Upper lobe of right lung (tissue), 1 donor: ENCODE measurements at regions of chr3 and their contacts with region 1.

Region 1: GRCh38 chr3:194592798-194593752 is 40.1 kb downstream of the TMEM44 start:
- DNase-seq: no peak
- ATAC-seq: peak; percentile 60
- H3K4me3 ChIP-seq: no peak overlapping the region
- H3K27ac ChIP-seq: no peak overlapping the region
- H3K4me1 ChIP-seq: no peaks in the 10 kb centered on the region
- H3K27me3 ChIP-seq: no peaks in the 10 kb centered on the region
- CTCF ChIP-seq: no peak

Region 2: DNA sequence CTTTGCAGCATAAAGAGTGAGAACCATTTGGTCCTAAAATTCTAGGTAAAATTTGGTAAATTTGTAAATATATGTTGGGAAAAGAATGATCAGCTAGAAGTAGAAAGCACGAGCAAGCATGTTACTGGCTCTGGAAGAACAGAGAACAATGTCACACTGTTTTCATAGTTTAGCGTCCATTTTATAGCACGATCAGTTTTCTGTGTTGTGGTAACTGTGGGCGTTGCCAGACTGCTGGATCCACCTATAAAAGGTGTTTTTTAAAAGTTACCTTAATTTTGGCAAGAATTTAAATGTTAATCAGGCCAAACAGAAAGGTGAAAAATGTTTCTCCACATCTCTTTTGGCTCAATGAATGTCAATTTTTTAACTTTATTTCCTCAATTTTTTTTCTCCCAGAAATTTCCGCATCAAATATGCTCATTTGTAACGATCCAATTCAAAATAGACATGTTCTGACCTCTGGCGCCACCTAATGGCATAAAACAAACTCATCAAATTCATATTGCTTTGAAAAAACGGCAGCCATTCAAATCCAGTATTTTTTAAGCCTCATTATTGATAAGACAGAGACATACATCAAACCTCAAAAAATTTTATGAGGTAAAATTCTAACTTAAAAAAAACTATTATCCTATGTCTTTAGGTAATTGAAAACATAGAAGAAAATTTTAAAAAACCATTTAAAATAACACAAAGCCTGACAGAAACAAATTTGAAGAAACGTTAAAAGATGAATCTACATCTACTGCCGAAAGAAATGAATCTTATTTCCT is 188.5 kb before region 1 on chr3:
- intact Hi-C with region 1: no loop called
- DNase-seq: no peak
- ATAC-seq: peak; percentile 56
- H3K4me3 ChIP-seq: no peak overlapping the region
- H3K27ac ChIP-seq: no peak overlapping the region
- H3K4me1 ChIP-seq: no peaks in the 10 kb centered on the region
- H3K27me3 ChIP-seq: peaks cover 5% of the 10 kb centered on the region
- CTCF ChIP-seq: peak; percentile 72

Region 3: DNA sequence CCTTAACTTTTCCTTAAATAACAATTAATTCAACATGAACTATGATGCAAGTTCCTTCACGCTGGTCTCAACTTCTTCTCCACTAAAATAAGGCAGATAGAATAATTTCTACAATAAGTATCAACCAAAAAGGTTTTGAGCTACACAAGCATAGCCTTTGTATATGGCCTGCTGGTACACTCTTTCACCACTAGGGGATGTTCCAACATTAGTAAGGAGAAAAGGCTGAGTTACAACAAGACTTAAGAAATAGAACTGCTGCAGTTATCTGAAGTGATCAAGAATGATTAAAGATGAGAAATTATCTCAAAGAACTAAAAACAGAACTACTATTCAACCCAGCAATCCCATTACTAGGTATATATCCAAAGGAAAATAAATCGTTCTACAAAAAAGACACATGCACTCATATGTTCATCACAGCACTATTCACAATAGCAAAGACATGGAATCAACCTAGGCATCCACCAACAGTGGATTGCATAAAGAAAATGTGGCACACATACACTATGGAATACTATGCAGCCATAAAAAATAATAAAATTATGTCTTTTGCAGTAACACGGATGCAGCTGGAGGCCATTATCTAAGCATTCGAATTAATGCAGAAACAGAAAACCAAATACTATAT is 120.7 kb before region 1 on chr3:
- intact Hi-C with region 1: loop called (anchors 5 kb)
- DNase-seq: no peak
- ATAC-seq: peak; percentile 92
- H3K4me3 ChIP-seq: no peak overlapping the region
- H3K27ac ChIP-seq: no peak overlapping the region
- H3K4me1 ChIP-seq: no peaks in the 10 kb centered on the region
- H3K27me3 ChIP-seq: no peaks in the 10 kb centered on the region
- CTCF ChIP-seq: peak; percentile 99

Region 4: DNA sequence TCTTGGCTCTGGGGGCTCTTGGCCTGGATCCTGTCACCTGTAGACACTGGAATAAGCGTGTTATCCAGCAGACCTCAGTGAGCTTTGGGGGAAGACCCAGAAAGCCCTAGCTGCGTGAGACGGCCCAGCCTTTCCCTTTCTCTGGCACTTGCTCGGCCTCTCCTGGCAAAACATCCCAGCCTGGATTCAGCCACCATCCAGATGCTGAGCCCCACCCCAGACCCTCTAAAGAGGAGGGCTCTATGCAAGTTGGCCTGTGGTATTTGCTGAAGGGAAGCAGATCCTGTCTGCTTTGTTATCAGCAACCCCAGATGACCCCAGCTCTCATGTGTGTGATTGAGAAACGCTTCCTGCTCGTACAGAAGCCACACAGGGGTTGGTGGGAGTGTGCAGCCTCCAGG is 359.8 kb after region 1 on chr3:
- intact Hi-C with region 1: no loop called
- DNase-seq: no peak
- ATAC-seq: peak; percentile 39
- H3K4me3 ChIP-seq: no peak overlapping the region
- H3K27ac ChIP-seq: no peak overlapping the region
- H3K4me1 ChIP-seq: peaks cover 3% of the 10 kb centered on the region
- H3K27me3 ChIP-seq: no peaks in the 10 kb centered on the region
- CTCF ChIP-seq: no peak